Activated CD4-positive, alpha-beta memory T cell treated with anti-CD3 and anti-CD28 coated beads for 36 hours (primary cell): ENCODE measurements at regions of chr5 and their contacts with region 1.

Region 1: DNA sequence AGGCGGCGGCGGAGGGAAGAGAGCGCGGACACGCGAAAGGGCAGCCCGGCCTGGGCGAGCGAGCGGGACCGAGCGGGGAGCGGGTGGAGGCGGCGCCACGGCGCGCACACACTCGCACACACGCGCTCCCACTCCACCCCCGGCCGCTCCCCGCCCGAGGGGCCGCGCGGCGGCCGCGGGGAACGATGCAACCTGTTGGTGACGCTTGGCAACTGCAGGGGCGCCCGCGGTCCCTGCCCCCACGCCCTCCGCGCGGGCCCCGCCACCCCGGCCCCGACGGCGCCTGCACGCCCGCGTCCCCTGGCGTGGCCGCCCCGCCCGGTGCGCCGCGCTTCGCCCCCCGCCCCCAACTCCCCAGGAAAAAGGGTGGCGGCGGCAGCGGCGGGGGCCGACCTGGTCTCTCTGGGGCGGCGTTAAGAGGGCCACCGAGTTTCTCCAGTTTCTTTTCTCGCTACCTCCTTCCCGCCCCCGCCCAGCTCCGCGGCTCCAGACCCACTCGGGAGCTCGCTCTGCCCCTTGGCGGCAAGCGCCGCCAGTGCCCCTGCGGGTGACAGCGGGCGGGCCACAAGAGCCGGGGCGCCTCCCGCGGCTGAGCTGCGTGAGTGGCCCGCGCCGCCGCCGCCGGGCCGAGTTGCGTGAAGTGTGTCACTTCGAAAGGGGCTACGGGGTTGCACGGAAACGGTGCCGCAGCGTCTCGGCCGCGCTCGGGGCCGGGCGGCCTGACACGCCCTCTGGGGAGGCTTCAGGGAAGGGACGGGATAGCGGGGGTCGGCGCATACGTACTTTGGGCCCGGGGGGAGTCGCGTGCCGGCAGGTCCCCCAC is at the start of gene NR3C1:
- DNase-seq: peak; percentile 87
- H3K4me3 Mint-ChIP-seq: peak within 1 kb of the TSS; percentile 89
- H3K27ac Mint-ChIP-seq: peak within 1 kb of the TSS; percentile 100
- H3K4me1 Mint-ChIP-seq: peaks cover 47% of the 10 kb centered on the region
- H3K27me3 Mint-ChIP-seq: no peaks in the 10 kb centered on the region
- total RNA-seq, gene NR3C1: 48.6 to 53.9 TPM

Region 2: GRCh38 chr5:143002459-143003328 is 401.1 kb before region 1 on chr5:
- CTCF ChIA-PET with region 1: interaction called, 37 read pairs
- POLR2A ChIA-PET with region 1: interaction called, 16 read pairs
- intact Hi-C with region 1: loop called (anchors 1 kb)
- DNase-seq: peak; percentile 79
- H3K4me3 Mint-ChIP-seq: peak overlapping the region; percentile 52
- H3K27ac Mint-ChIP-seq: peak overlapping the region; percentile 91
- H3K4me1 Mint-ChIP-seq: peaks cover 56% of the 10 kb centered on the region
- H3K27me3 Mint-ChIP-seq: no peaks in the 10 kb centered on the region

Region 3: DNA sequence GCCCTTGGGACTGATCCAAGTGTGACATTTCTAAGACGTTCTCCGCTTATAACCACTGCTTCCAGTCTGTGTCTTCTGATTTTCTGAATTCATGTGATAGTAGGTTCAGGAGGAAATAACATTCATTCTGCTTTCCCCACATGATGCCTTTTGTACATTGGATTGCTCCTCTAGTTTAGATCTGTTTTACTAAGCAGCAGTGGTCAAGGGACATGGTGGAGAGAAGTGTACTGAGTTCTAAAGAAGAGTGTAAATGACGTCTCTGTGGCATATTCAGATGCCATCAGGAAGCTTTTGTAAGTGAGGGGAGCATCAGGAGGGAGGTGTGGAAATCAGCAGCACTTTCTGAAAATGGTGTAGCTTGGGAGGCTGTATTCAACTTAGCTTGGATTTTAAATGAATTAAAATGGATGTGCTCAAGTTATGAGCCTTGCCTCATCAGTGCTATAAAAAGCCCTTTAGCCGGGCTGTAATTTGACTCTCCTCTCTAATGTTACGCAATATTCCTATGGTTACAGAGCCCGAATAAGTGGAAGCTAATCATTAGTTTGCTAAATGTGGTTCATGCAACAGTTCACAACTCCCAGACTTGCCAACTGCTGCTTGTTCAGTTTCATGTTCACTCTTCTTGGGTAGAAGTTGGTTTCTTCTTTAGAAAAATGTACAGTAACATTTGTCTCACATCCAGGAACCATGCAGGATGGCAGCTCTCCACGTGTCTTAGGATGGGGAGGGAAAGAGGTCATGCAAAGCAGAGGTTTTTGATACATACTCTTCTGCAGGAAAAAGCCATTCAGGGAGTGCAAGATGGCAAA is 352.4 kb before region 1 on chr5:
- CTCF ChIA-PET with region 1: no interaction called
- POLR2A ChIA-PET with region 1: no interaction called
- intact Hi-C with region 1: loop called (anchors 2 kb)
- DNase-seq: no peak
- H3K4me3 Mint-ChIP-seq: no peak overlapping the region
- H3K27ac Mint-ChIP-seq: no peak overlapping the region
- H3K4me1 Mint-ChIP-seq: peaks cover 66% of the 10 kb centered on the region
- H3K27me3 Mint-ChIP-seq: no peaks in the 10 kb centered on the region

Region 4: GRCh38 chr5:143182901-143183820 is 220.6 kb before region 1 on chr5:
- CTCF ChIA-PET with region 1: interaction called, 13 read pairs
- POLR2A ChIA-PET with region 1: interaction called, 3 read pairs
- intact Hi-C with region 1: no loop called
- DNase-seq: peak; percentile 89
- H3K4me3 Mint-ChIP-seq: peak overlapping the region; percentile 57
- H3K27ac Mint-ChIP-seq: peak overlapping the region; percentile 90
- H3K4me1 Mint-ChIP-seq: peaks cover 56% of the 10 kb centered on the region
- H3K27me3 Mint-ChIP-seq: no peaks in the 10 kb centered on the region

Region 5: GRCh38 chr5:143435210-143435657 is 31.4 kb after region 1 on chr5:
- CTCF ChIA-PET with region 1: interaction called, 30 read pairs
- POLR2A ChIA-PET with region 1: interaction called, 54 read pairs
- intact Hi-C with region 1: loop called (anchors 1 kb)
- DNase-seq: peak; percentile 51
- H3K4me3 Mint-ChIP-seq: peak overlapping the region; percentile 81
- H3K27ac Mint-ChIP-seq: peak overlapping the region; percentile 87
- H3K4me1 Mint-ChIP-seq: peaks cover 68% of the 10 kb centered on the region
- H3K27me3 Mint-ChIP-seq: no peaks in the 10 kb centered on the region

Region 6: GRCh38 chr5:143733665-143734455 is 330.1 kb after region 1 on chr5:
- CTCF ChIA-PET with region 1: no interaction called
- POLR2A ChIA-PET with region 1: no interaction called
- intact Hi-C with region 1: no loop called
- DNase-seq: no peak
- H3K4me3 Mint-ChIP-seq: no peak overlapping the region
- H3K27ac Mint-ChIP-seq: no peak overlapping the region
- H3K4me1 Mint-ChIP-seq: no peaks in the 10 kb centered on the region
- H3K27me3 Mint-ChIP-seq: peaks cover 4% of the 10 kb centered on the region

Region 7: GRCh38 chr5:143824851-143825720 is 421.3 kb after region 1 on chr5:
- CTCF ChIA-PET with region 1: interaction called, 8 read pairs
- POLR2A ChIA-PET with region 1: interaction called, 3 read pairs
- intact Hi-C with region 1: loop called (anchors 2 kb)
- DNase-seq: peak; percentile 89
- H3K4me3 Mint-ChIP-seq: no peak overlapping the region
- H3K27ac Mint-ChIP-seq: no peak overlapping the region
- H3K4me1 Mint-ChIP-seq: peaks cover 22% of the 10 kb centered on the region
- H3K27me3 Mint-ChIP-seq: peaks cover 3% of the 10 kb centered on the region